ENCODE measurements at regions of chr15 and their contacts with region 1.

Region 1: DNA sequence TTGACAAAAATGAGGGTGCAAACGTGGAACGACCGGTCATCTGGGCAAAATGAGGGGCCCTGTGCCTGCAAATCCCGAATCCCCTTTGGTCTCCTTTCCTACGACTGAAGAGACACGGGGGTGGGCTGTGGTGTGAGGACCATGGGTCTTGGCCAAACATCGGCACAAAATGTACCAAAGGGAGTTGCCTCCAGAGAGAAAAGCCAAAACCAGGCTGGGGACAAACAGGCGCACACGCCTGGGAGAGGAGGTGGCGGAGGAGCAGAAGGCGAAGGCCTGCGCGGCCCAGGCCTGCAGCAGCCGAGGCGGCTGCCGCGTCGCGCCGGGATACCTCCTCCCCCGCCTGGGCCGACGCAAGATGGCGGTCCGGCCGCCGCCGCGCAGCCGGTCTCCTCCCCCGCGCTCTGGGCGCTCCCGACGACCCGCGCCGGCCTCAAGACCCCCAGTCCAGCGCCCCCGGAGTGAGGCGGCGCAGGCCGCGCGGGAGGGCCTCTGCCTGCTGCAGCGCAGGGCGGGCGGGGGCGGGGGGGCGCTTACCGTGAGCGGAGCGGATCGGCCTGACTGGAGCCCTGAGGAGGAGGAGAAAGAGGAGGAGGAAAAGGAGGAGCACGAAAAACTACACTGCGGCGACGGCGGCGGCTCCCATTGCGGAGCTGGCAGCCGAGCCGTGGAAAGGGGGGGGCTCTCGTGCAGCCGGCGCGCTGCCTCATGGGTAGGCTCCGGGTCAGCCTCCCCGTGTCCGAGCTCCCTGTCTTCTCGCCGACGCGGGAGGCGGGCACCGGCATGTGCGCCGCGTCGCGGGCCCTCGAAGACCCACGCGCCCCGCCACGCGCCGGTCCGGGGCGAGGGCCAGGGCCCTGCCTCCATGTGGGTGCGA is at the start of gene ZNF280D:
- DNase-seq: peak; percentile 89
- H3K4me3 ChIP-seq: peak within 1 kb of the TSS; percentile 76
- H3K4me3 Mint-ChIP-seq: peak within 1 kb of the TSS; percentile 100
- H3K27ac Mint-ChIP-seq: peak within 1 kb of the TSS; percentile 99
- H3K4me1 ChIP-seq: peaks cover 16% of the 10 kb centered on the region
- H3K4me1 Mint-ChIP-seq: no peaks in the 10 kb centered on the region
- H3K27me3 ChIP-seq: no peaks in the 10 kb centered on the region
- H3K27me3 Mint-ChIP-seq: no peaks in the 10 kb centered on the region
- CTCF ChIP-seq: no peak
- total RNA-seq, gene ZNF280D: 28.7 and 31.0 TPM in 2 replicates

Region 2: DNA sequence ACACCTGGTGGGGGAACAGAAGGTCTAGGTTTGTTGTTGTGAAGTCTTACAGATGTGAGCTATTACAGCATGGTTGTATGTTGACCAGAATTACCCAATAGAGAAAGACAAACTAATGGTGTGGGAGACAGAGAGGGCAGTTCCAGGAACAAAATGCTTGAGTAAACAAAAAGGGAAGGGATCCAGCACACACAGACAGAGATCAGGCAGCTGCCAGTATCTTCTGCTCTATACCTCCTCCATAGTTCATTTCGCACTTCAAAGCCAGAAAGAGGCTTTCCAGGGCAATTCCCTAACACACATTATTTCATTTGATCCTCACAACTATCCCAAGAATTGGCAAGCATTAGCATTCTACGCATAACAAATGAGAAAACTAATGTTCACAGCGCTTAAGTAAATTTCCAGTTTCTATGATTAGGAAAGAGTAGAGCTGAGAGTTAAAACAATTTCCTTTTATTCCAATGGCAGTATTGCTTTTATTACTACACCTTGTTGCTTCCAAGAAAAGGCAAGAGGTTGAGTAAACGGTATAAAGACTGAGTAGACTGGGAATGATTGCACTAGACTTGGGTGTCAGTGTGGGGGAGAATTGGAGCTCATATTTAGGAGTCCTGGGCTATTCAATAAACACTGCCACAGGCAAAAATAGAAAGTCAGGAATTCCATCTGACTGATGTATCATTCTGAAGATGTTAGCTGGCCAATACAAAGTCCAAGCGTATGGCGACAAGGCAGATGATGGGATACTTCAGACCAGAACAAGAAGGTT is 39.9 kb after region 1 on chr15:
- CTCF ChIA-PET with region 1: no interaction called
- POLR2A ChIA-PET with region 1: no interaction called
- intact Hi-C with region 1: loop called (anchors 1 kb)
- DNase-seq: peak in 1 of 2 experiments; percentile 23
- H3K4me3 ChIP-seq: no peak overlapping the region
- H3K4me3 Mint-ChIP-seq: no peak overlapping the region
- H3K27ac Mint-ChIP-seq: no peak overlapping the region
- H3K4me1 ChIP-seq: no peaks in the 10 kb centered on the region
- H3K4me1 Mint-ChIP-seq: peaks cover 11% of the 10 kb centered on the region
- H3K27me3 ChIP-seq: no peaks in the 10 kb centered on the region
- H3K27me3 Mint-ChIP-seq: no peaks in the 10 kb centered on the region
- CTCF ChIP-seq: no peak